Cardiac septum (tissue), 1 donor: ENCODE measurements at regions of chr20 and their contacts with region 1.

Region 1: GRCh38 chr20:45095753-45096371 is 5.1 kb downstream of the KCNS1 start:
- DNase-seq: no peak

Region 2: GRCh38 chr20:45011108-45011526 is 84.7 kb before region 1 on chr20:
- intact Hi-C with region 1: loop called (anchors 5 kb)
- DNase-seq: no peak

Region 3: GRCh38 chr20:45049904-45050471 is 45.9 kb before region 1 on chr20:
- intact Hi-C with region 1: loop called (anchors 5 kb)
- DNase-seq: no peak

Region 4: GRCh38 chr20:45206746-45207145 is 110.9 kb after region 1 on chr20 and contains the start of gene SEMG1:
- intact Hi-C with region 1: no loop called
- DNase-seq: no peak
- total RNA-seq, gene SEMG1: not detected